ENCODE measurements at regions of chr2 and their contacts with region 1.

Region 1: GRCh38 chr2:170815746-170816503 is 762 bp upstream of the GAD1 start:
- DNase-seq: peak; percentile 66 to 75 (median 72)
- H3K4me3 ChIP-seq: peak overlapping the region in 6 of 7 experiments; percentile 3 to 75 (median 62)
- H3K27ac ChIP-seq: no peak overlapping the region
- H3K4me1 ChIP-seq: peaks cover 2 to 50% (median 41%) of the 10 kb centered on the region in 4 experiments
- H3K27me3 ChIP-seq: peaks cover 14 to 75% (median 63%) of the 10 kb centered on the region in 5 experiments

Region 2: GRCh38 chr2:170324640-170325046 is 491.3 kb before region 1 on chr2:
- CTCF ChIA-PET with region 1: interaction called, 92 read pairs
- POLR2A ChIA-PET with region 1: no interaction called
- DNase-seq: peak; percentile 66 to 82 (median 79)
- H3K4me3 ChIP-seq: no peak overlapping the region
- H3K27ac ChIP-seq: no peak overlapping the region
- H3K4me1 ChIP-seq: no peaks in the 10 kb centered on the region
- H3K27me3 ChIP-seq: no peaks in the 10 kb centered on the region

Region 3: GRCh38 chr2:170361090-170361936 is 454.6 kb before region 1 on chr2:
- CTCF ChIA-PET with region 1: interaction called, 16 read pairs
- POLR2A ChIA-PET with region 1: no interaction called
- DNase-seq: peak; percentile 74 to 85 (median 83)
- H3K4me3 ChIP-seq: no peak overlapping the region
- H3K27ac ChIP-seq: no peak overlapping the region
- H3K4me1 ChIP-seq: peaks cover 14 to 28% (median 15%) of the 10 kb centered on the region in 4 experiments
- H3K27me3 ChIP-seq: no peaks in the 10 kb centered on the region

Region 4: GRCh38 chr2:170369894-170370293 is 446.0 kb before region 1 on chr2:
- CTCF ChIA-PET with region 1: interaction called, 67 read pairs
- POLR2A ChIA-PET with region 1: no interaction called
- DNase-seq: peak; percentile 41 to 57 (median 46)
- H3K4me3 ChIP-seq: no peak overlapping the region
- H3K27ac ChIP-seq: no peak overlapping the region
- H3K4me1 ChIP-seq: peaks cover 3 to 20% (median 7%) of the 10 kb centered on the region in 4 experiments
- H3K27me3 ChIP-seq: peaks cover 0 to 12% (median 4%) of the 10 kb centered on the region in 5 experiments

Region 5: DNA sequence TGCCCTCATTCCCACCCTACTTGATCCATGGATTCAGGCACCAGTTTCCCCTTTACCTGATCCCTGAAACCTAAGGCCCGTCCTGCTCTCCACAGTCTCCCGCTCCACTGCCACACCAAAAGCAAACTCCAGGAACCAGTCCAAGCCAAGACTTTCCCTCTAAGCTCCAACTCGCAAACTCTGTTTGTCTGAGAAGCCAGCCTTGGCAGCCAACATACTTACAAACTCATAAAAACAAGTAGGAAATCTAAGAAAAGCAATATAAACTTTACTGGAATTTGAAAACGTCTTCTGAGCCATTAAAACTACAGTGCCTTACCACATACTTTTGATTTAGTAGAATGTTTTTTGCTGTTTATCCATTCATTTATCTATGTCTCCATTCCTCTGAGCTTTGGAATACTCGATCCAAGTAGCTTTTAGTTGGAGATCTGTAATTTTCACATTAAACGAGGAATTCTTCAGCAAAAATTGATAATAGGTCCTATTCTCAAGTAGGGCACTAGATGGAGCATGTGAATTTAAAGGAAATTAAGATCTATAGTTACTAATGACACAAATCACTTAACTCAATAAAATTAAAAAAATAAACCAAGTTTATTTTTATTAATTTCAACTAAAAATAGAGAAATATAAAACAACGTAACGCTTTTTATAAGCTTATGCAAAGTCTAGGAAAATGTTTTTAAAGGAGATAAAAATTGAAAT is 438.3 kb before region 1 on chr2:
- CTCF ChIA-PET with region 1: interaction called, 67 read pairs
- POLR2A ChIA-PET with region 1: no interaction called
- DNase-seq: no peak
- H3K4me3 ChIP-seq: no peak overlapping the region
- H3K27ac ChIP-seq: no peak overlapping the region
- H3K4me1 ChIP-seq: no peaks in the 10 kb centered on the region
- H3K27me3 ChIP-seq: no peaks in the 10 kb centered on the region

Measured in common myeloid progenitor, CD34-positive (primary cell).